Activated CD4-positive, alpha-beta T cell treated with anti-CD3 and anti-CD28 coated beads, Interleukin-2, amount 10 ng/mL, durations not matched to agents 24 days and 14 days (primary cell): ENCODE measurements at regions of chr3 and their contacts with region 1.

Region 1: GRCh38 chr3:106428565-106428994 is 559.8 kb upstream of the CBLB start:
- DNase-seq: no peak
- H3K4me3 Mint-ChIP-seq: peak overlapping the region; percentile 25
- H3K27ac Mint-ChIP-seq: peak overlapping the region; percentile 96
- H3K4me1 Mint-ChIP-seq: peaks cover 42% of the 10 kb centered on the region
- H3K27me3 Mint-ChIP-seq: no peaks in the 10 kb centered on the region

Region 2: GRCh38 chr3:105700575-105700974 is 728.0 kb before region 1 on chr3:
- intact Hi-C with region 1: no loop called
- DNase-seq: no peak
- H3K4me3 Mint-ChIP-seq: no peak overlapping the region
- H3K27ac Mint-ChIP-seq: peak overlapping the region; percentile 49
- H3K4me1 Mint-ChIP-seq: peaks cover 27% of the 10 kb centered on the region
- H3K27me3 Mint-ChIP-seq: no peaks in the 10 kb centered on the region

Region 3: DNA sequence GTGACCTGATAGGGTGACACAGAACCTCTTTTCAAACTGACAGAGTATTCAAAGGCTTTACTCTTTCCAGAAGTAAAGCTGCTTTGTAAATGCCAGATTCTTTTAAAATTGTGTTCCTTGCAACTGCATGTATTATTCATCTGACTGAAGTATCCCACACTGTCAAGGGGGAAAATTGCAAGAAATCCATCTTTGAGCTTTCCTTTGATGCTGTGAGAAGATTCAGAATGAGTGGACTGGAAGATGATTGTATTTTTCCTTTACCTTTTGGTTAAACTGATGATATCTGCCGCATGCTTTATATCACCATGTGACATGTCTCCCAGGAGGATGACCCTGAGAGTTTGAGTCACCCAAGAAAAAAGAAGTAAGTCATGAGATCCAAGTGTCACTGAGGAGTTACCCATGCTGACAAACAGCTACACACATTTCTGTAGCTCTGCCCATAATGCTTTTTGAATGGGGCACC is 308.9 kb before region 1 on chr3:
- intact Hi-C with region 1: loop called (anchors 2 kb)
- DNase-seq: no peak
- H3K4me3 Mint-ChIP-seq: peak overlapping the region; percentile 46
- H3K27ac Mint-ChIP-seq: peak overlapping the region; percentile 87
- H3K4me1 Mint-ChIP-seq: peaks cover 28% of the 10 kb centered on the region
- H3K27me3 Mint-ChIP-seq: no peaks in the 10 kb centered on the region

Region 4: GRCh38 chr3:106232956-106233355 is 195.6 kb before region 1 on chr3:
- intact Hi-C with region 1: loop called (anchors 5 kb)
- DNase-seq: no peak
- H3K4me3 Mint-ChIP-seq: no peak overlapping the region
- H3K27ac Mint-ChIP-seq: no peak overlapping the region
- H3K4me1 Mint-ChIP-seq: peaks cover 42% of the 10 kb centered on the region
- H3K27me3 Mint-ChIP-seq: no peaks in the 10 kb centered on the region

Region 5: DNA sequence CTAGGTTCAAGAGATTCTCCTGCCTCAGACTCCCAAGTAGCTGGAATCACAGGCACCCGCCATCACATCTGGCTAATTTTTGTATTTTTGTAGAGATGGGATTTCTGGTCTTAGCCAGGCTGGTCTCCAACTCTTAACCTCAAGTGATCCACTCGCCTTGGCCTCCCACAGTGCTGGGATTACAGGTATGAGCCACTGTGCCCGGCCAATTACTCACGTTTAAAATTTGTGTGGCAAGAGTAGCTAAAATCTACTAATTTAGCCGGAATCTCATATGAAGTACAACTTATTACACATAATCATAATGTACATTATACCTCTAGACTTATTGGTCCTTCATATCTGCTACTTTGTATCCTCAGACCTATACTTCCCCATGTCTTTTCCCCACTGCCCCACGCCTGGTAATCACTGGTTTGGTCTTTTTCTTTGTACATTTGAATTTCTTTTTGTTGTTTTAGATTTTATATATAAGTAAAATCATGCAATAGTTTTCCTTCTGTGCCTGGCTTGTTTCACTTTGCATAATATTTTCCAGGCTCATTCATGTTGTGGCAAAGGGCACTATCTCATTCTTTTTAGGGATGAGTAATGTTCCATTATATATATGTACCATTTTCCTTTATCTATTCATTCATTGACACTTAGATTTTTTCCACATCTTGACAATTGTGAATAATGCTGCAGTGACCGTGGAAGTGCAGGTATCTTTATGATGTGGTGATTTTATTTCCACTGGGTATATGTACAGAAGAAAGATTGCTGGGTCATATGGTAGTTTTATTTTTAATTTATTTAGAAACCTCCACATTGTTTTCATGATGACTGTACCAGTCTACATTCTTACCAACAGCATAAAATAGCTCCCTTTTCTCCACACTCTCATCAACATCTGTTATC is 45.2 kb after region 1 on chr3:
- intact Hi-C with region 1: loop called (anchors 1 kb)
- DNase-seq: no peak
- H3K4me3 Mint-ChIP-seq: no peak overlapping the region
- H3K27ac Mint-ChIP-seq: peak overlapping the region; percentile 83
- H3K4me1 Mint-ChIP-seq: peaks cover 8% of the 10 kb centered on the region
- H3K27me3 Mint-ChIP-seq: no peaks in the 10 kb centered on the region

Region 6: GRCh38 chr3:106609666-106610301 is 181.2 kb after region 1 on chr3:
- intact Hi-C with region 1: loop called (anchors 1 kb)
- DNase-seq: peak; percentile 90
- H3K4me3 Mint-ChIP-seq: no peak overlapping the region
- H3K27ac Mint-ChIP-seq: peak overlapping the region; percentile 83
- H3K4me1 Mint-ChIP-seq: peaks cover 24% of the 10 kb centered on the region
- H3K27me3 Mint-ChIP-seq: no peaks in the 10 kb centered on the region